ENCODE measurements at regions of chr11 and their contacts with region 1.

Region 1: DNA sequence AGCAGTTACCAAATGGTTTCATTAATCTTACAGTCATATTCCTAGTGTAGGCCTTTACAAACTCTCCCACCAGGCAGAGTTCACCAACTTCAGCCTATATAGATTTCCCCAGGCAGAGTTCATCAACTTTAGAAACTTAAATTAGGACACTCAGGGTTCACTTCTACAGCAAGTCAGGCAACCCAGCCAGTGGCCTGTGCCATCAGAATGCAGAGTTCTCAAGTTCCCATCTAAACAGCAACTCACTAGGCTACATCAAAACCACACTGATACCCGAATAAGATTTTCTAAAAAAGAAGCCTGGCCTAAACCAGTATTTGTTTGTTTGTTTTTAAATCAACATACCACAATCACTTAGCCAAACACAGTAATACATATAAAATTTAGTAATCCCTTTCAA is 33.7 kb downstream of the PICALM start:
- DNase-seq: peak in 3 of 5 donors; percentile 30 to 62 (median 43)
- H3K4me3 ChIP-seq: no peak overlapping the region
- H3K27ac ChIP-seq: no peak overlapping the region
- H3K4me1 ChIP-seq: peaks cover 0 to 28% (median 6%) of the 10 kb centered on the region in 3 donors
- H3K27me3 ChIP-seq: no peaks in the 10 kb centered on the region
- CTCF ChIP-seq: no peak

Region 2: GRCh38 chr11:85821636-85822035 is 213.5 kb before region 1 on chr11:
- intact Hi-C with region 1: no loop called
- DNase-seq: no peak
- H3K4me3 ChIP-seq: no peak overlapping the region
- H3K27ac ChIP-seq: no peak overlapping the region
- H3K4me1 ChIP-seq: peaks cover 0 to 8% (median 3%) of the 10 kb centered on the region in 3 donors
- H3K27me3 ChIP-seq: no peaks in the 10 kb centered on the region
- CTCF ChIP-seq: no peak

Region 3: DNA sequence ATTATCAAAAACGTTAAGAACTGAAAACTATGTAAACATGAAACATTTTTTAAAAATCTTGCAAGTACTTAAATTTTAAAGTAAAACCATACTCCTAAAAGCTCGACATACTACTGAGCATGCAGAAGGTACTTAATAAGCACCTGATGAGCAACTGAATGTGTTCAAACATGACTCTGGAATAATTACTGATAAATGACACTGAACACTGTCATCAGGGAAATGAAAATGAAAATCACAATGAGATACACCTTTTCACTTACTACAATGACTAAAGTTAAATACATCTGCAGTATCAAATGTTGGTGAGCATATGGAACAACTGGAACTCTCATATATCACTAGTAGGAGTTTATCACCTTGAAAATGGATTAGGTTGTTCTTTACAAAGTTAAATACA is 31.5 kb before region 1 on chr11:
- intact Hi-C with region 1: no loop called
- DNase-seq: no peak
- H3K4me3 ChIP-seq: no peak overlapping the region
- H3K27ac ChIP-seq: no peak overlapping the region
- H3K4me1 ChIP-seq: no peaks in the 10 kb centered on the region
- H3K27me3 ChIP-seq: no peaks in the 10 kb centered on the region
- CTCF ChIP-seq: no peak

Region 4: DNA sequence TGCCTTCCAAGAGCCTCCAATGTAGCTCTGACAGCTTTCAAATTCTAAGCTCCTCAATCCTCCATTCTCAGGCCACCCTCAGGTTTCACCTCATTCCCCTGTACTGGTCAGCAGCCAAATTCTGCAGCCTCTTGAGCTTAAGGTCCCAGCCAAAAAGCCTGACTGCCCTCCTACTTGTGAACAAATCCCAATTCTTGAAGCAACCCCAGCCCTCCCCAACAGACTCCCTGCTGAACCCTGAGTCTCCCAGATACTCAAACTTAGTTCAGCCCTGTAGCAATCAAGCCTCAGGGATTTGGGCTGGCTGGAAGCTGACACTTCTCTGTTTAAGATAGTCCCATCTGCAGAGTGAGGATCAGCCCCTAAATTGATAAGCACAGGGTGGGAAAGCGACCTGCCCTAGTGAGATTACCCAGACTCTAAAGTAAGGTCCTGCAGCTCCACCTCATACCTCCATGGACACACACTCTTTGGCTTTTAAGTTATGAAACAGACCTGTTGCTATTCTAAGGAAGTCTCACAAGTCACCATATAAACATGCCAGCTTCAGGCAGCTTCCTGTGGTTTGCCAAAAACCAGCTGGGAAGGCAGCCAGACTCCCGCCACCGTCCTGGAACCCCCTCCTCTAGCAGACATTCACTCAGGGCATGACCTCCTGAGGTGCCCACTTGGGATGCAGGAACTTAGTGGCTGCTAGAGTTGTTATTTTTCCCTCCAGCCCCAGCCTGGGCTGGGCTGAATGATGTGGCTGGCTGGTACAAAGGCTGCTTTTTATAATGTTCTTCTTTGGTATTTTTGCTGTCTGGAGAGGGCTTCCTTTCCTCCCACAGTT is 116.2 kb after region 1 on chr11:
- intact Hi-C with region 1: no loop called
- DNase-seq: peak in 3 of 5 donors; percentile 21 to 84 (median 42)
- H3K4me3 ChIP-seq: no peak overlapping the region
- H3K27ac ChIP-seq: peak overlapping the region; percentile 68 to 69
- H3K4me1 ChIP-seq: peaks cover 13 to 37% (median 33%) of the 10 kb centered on the region in 3 donors
- H3K27me3 ChIP-seq: no peaks in the 10 kb centered on the region
- CTCF ChIP-seq: no peak

Region 5: GRCh38 chr11:86182976-86183584 is 147.9 kb after region 1 on chr11:
- intact Hi-C with region 1: no loop called
- DNase-seq: no peak
- H3K4me3 ChIP-seq: no peak overlapping the region
- H3K27ac ChIP-seq: no peak overlapping the region
- H3K4me1 ChIP-seq: peaks cover 0 to 11% (median 0%) of the 10 kb centered on the region in 3 donors
- H3K27me3 ChIP-seq: no peaks in the 10 kb centered on the region
- CTCF ChIP-seq: no peak

Region 6: DNA sequence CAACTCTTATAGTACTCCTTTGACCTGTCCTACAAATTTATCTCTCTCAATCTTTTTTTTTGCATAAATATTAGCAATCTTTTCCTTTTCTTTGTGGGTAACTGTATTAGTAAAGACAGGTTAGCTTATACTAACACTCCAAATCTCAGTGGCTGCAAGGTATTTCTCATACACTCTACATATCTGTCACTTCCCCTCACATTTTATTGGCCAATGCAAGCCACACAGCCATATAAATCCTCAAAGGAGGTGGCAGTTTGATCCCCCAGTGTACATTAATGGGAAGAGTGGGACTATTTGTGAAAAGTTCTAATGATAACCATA is 166.8 kb after region 1 on chr11:
- intact Hi-C with region 1: loop called (anchors 10 kb)
- DNase-seq: peak in 1 of 5 donors; percentile 15
- H3K4me3 ChIP-seq: peak overlapping the region; percentile 57 to 74 (median 68)
- H3K27ac ChIP-seq: no peak overlapping the region
- H3K4me1 ChIP-seq: peaks cover 0 to 5% (median 0%) of the 10 kb centered on the region in 3 donors
- H3K27me3 ChIP-seq: no peaks in the 10 kb centered on the region
- CTCF ChIP-seq: no peak